ENCODE measurements at regions of chr17 and their contacts with region 1.

Region 1: GRCh38 chr17:64938925-64939474 is 19.7 kb upstream of the LRRC37A3 start:
- DNase-seq: peak; percentile 76
- ATAC-seq: peak; percentile 86
- H3K4me3 Mint-ChIP-seq: no peak overlapping the region
- H3K27ac Mint-ChIP-seq: no peak overlapping the region
- H3K4me1 Mint-ChIP-seq: peaks cover 1% of the 10 kb centered on the region
- H3K27me3 Mint-ChIP-seq: no peaks in the 10 kb centered on the region

Region 2: DNA sequence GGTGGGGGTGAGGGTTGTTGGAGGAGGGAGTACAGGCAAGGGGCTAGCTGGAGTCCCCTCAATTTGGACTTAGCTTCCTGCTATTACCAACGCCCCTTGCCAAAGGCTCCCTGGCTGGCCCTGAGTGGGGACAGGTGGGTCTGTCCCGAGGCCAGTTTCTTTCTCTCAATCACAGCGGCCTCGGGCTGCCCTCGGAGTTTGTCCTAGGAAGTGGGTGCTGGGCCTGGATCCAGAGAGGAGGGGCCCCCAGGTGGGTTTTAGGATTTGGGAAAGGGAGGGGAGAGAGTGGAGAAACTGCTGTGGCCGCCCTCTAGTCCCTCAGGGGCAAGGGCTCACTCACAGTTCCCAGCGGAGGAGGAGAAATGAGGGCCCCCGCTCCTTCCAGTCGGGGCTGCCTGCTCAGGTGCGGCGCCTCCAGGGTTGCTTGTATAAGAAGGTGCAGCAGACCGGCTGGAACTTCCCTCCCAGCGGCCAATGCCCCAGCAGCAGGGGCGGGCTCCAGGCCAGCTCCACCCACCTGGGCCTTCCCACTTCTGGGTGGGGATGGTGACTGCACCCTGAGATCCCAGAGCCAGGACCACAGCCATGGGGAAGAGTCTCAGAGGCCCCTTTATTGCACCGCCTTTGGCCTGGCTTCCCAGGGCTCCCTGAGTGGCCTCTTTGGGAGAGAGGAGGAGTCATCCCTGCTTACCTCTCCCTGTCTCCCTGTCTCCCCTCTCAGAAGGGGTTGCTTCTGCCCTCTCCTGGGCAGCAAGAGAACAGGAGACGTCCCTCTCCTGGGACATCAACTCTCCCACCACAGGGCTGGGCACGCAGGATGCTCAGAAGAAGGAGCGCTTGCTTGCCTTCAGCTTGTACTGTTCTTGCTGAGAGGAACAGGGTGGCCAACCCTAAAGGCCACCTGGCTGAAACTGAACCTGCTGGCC is 164.9 kb before region 1 on chr17:
- CTCF ChIA-PET with region 1: interaction called, 4 read pairs
- POLR2A ChIA-PET with region 1: no interaction called
- intact Hi-C with region 1: loop called in 1 of 2 experiments (anchors 1 kb)
- DNase-seq: peak; percentile 27
- ATAC-seq: no peak
- H3K4me3 Mint-ChIP-seq: no peak overlapping the region
- H3K27ac Mint-ChIP-seq: no peak overlapping the region
- H3K4me1 Mint-ChIP-seq: peaks cover 15% of the 10 kb centered on the region
- H3K27me3 Mint-ChIP-seq: peaks cover 14% of the 10 kb centered on the region

Region 3: DNA sequence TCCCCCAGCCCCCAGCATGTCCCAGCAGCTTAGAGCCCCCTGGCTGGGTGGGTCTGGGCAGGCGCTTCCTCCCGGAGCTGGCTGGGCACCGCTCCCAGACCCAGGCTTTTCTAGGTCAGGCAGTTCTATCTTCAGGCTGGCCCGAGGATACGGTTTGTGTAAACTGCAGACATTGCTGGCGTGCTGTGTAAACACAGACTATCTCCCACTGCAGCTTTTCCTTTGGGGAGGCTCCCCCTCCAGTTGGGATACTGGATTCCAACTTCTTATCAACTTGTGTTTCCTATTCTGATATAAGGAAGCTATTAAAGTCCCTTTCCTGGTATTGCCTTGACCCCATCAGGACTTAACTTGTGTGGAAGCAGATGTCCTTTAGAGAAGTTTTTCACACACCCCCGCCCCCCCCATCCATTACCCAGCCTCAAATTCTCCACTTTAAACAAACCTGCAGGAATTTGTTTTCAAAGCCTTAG is 135.8 kb after region 1 on chr17:
- CTCF ChIA-PET with region 1: no interaction called
- POLR2A ChIA-PET with region 1: no interaction called
- intact Hi-C with region 1: no loop called
- DNase-seq: no peak
- ATAC-seq: no peak
- H3K4me3 Mint-ChIP-seq: no peak overlapping the region
- H3K27ac Mint-ChIP-seq: no peak overlapping the region
- H3K4me1 Mint-ChIP-seq: no peaks in the 10 kb centered on the region
- H3K27me3 Mint-ChIP-seq: no peaks in the 10 kb centered on the region